ENCODE measurements at regions of chr12 and their contacts with region 1.

Region 1: DNA sequence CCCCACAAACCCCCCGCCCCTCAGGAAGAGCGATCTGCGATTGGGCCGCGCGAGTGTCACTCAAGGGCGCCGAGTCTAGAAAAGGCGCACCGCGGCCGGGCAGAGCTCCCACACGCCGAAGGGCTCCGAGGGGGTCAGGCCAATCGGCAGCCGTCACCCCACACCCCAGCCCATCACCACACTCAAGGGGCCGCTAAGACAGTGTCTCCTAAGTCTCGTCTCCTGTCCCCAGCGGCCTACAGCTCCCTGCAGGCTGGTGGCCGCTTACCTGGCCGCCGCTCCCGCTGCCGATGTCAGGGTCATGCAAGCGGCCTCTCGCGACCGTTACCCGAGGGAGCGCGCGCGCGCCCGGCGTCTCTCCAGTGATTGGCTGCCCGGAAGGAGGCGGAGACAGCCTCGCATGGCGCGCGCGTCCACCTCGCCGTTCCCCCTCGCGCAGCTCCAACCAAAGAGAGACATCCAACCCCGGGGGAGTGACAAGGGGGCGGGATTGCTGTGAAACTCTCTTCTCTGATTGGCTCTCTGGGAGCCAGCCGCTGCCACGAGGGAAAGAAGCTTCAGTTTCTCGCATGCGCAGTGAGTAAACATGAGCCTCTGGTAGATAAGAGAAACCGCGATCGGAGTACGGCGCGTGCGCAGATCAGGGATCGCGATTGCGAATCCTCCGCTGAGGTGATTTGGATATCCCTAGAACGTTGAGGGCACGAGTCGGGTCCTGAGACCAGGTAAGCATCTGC is at the starts of genes MPHOSPH9 and MTRFR:
- DNase-seq: peak; percentile 100
- H3K4me3 Mint-ChIP-seq: peak within 1 kb of the TSS; percentile 95
- H3K27ac Mint-ChIP-seq: peak within 1 kb of the TSS; percentile 99
- H3K4me1 Mint-ChIP-seq: peaks cover 48% of the 10 kb centered on the region
- H3K27me3 Mint-ChIP-seq: peaks cover 3% of the 10 kb centered on the region
- total RNA-seq, gene MPHOSPH9: 87.1 and 90.3 TPM in 2 replicates
- total RNA-seq, gene MTRFR: 30.3 and 30.5 TPM in 2 replicates

Region 2: DNA sequence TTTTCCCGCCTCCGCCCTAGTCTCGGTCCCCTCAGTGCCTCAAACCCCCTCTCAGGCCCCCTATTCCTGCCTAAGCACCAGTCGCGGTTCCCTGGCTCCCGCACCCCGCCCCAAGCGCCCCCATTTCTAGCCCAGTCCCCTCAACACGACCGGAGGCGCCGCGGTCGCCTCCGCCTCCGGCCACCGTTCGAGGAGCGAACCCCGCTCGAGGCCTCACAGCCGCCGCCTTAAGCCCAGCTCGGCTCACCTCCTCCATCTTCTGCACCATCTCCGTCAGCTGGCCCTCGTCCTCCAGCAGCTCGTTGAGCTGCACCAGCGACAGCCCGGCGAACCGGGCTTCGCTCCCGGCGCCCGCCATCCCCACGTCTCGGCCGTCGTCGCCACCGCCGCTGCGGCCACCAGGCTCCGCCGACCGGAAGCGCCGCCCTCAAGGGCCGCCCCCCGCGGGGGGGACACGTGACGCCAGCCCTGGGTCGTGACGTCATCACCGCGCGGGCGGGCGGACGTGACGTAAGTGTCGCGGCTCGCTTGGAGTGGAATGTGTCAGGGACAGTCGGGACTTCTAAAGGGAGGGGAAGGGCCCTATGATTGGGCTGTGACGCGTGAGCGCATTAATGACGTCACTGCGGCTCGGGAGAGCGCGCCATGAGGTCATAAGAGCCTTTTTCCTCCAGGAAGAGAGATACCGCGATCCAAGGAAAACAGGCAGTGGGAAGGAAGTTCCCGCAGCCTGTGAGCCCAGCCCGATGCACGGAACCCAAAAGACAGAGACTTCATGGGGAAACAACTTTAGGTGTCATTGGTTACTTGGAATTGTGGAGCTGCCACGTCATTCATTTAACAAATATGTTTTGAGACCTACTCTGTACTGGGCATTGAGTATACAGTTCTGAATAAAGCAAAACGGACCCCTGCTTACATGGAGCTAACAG is 337.0 kb before region 1 on chr12 and contains the start of gene VPS37B:
- intact Hi-C with region 1: loop called (anchors 10 kb)
- DNase-seq: peak; percentile 97
- H3K4me3 Mint-ChIP-seq: peak within 1 kb of the TSS; percentile 94
- H3K27ac Mint-ChIP-seq: peak within 1 kb of the TSS; percentile 90
- H3K4me1 Mint-ChIP-seq: peaks cover 73% of the 10 kb centered on the region
- H3K27me3 Mint-ChIP-seq: peaks cover 6% of the 10 kb centered on the region
- total RNA-seq, gene VPS37B: 9.2 and 9.5 TPM in 2 replicates

Region 3: DNA sequence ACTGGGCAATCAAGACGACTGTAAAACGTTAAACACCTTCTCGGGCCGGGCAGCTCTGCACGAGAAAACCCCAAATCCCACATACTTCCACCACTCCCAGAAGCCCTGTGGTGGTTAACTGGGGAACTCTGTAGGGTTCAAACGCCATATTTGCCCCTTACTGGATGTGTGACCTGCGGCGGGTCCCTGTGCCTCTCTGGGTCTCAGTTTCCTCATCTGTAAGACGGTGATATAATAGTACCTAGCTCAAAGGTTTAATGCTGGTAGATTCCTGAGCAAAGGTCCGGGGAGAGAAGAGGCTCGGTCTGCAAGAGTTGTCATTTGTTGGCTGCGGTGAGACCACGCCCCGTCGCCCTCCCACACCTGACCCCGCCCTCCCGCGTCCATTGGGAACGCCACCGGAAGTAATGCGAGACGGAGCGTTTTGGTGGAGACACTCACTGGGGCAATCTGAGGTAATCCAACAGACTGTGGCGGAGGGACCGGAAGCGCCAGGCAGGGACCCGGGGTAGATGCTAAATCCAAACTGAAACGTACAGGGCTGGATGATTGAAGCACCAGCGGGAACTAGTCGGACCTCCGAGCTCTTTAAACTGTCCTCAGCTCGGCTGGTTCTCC is 258.6 kb before region 1 on chr12:
- intact Hi-C with region 1: loop called (anchors 2 kb)
- DNase-seq: peak; percentile 100
- H3K4me3 Mint-ChIP-seq: peak overlapping the region; percentile 94
- H3K27ac Mint-ChIP-seq: peak overlapping the region; percentile 99
- H3K4me1 Mint-ChIP-seq: peaks cover 19% of the 10 kb centered on the region
- H3K27me3 Mint-ChIP-seq: no peaks in the 10 kb centered on the region

Region 4: DNA sequence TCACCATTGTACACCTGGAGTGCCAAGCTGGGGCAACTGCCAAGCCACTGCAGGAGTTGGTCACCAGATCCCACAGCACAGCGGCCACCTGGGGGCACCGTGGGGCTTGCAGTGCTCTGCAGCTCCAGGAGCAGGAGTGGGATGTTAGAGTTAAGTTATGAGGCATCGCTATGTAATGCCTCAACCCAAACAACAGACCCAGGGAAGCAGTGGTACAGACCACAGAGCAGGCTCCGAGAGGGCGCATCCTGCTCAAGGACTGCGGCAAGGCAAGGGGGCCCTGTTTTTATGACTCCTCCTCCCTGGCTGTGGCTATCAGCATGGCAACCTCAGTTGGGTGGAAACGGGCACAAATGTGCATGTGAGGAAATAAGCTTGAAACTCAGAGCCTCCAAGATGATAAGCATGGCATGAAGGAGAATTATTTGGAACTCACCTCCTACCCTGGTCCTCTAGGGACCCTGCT is 189.4 kb before region 1 on chr12:
- intact Hi-C with region 1: loop called (anchors 1 kb)
- DNase-seq: peak; percentile 89
- H3K4me3 Mint-ChIP-seq: no peak overlapping the region
- H3K27ac Mint-ChIP-seq: peak overlapping the region; percentile 78
- H3K4me1 Mint-ChIP-seq: peaks cover 22% of the 10 kb centered on the region
- H3K27me3 Mint-ChIP-seq: no peaks in the 10 kb centered on the region

Region 5: GRCh38 chr12:123150744-123151456 is 82.1 kb before region 1 on chr12 and contains the start of gene PITPNM2:
- intact Hi-C with region 1: loop called (anchors 5 kb)
- DNase-seq: peak; percentile 91
- H3K4me3 Mint-ChIP-seq: peak within 1 kb of the TSS; percentile 85
- H3K27ac Mint-ChIP-seq: peak within 1 kb of the TSS; percentile 86
- H3K4me1 Mint-ChIP-seq: peaks cover 32% of the 10 kb centered on the region
- H3K27me3 Mint-ChIP-seq: peaks cover 15% of the 10 kb centered on the region
- total RNA-seq, gene PITPNM2: 19.0 and 19.2 TPM in 2 replicates

Region 6: GRCh38 chr12:123271001-123271729 is 38.2 kb after region 1 on chr12:
- intact Hi-C with region 1: loop called (anchors 2 kb)
- DNase-seq: peak; percentile 93
- H3K4me3 Mint-ChIP-seq: peak overlapping the region; percentile 92
- H3K27ac Mint-ChIP-seq: no peak overlapping the region
- H3K4me1 Mint-ChIP-seq: peaks cover 16% of the 10 kb centered on the region
- H3K27me3 Mint-ChIP-seq: no peaks in the 10 kb centered on the region

Region 7: DNA sequence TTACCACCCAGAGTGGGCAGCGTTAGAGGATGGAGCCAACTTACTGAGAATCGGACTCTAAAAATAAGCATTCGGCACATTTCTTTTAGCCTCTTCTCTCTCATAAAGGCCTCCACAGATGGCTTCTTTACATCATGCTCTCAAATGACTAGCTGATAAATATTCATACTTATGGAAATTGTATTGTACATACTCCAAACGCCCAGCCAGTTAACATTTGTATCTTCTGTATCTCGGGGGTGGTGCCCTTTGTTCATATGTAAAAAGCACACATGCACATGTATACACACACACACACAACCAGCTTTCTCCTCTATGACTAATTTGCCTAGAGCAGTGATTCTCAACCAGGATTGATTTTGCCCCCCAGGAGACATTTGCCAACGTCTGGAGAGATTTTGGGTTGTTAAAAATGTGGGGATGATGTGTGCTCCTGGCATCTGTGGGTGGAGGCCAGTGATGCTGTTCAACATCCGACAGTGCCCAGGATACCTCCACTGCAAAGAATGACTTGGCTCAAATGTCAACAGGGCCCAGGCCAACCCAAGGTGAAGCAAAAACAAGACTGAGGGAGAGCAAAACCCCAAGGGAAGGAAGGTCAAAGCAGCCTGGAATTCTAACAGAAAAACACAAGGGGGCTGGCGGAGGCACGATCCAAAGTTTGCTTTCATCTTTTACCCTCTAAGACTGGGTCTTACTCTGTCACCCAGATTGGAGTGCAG is 53.8 kb after region 1 on chr12:
- intact Hi-C with region 1: no loop called
- DNase-seq: no peak
- H3K4me3 Mint-ChIP-seq: no peak overlapping the region
- H3K27ac Mint-ChIP-seq: no peak overlapping the region
- H3K4me1 Mint-ChIP-seq: peaks cover 2% of the 10 kb centered on the region
- H3K27me3 Mint-ChIP-seq: no peaks in the 10 kb centered on the region

Region 8: GRCh38 chr12:123398550-123399254 is 165.7 kb after region 1 on chr12:
- intact Hi-C with region 1: no loop called
- DNase-seq: no peak
- H3K4me3 Mint-ChIP-seq: no peak overlapping the region
- H3K27ac Mint-ChIP-seq: no peak overlapping the region
- H3K4me1 Mint-ChIP-seq: peaks cover 2% of the 10 kb centered on the region
- H3K27me3 Mint-ChIP-seq: no peaks in the 10 kb centered on the region

Region 9: DNA sequence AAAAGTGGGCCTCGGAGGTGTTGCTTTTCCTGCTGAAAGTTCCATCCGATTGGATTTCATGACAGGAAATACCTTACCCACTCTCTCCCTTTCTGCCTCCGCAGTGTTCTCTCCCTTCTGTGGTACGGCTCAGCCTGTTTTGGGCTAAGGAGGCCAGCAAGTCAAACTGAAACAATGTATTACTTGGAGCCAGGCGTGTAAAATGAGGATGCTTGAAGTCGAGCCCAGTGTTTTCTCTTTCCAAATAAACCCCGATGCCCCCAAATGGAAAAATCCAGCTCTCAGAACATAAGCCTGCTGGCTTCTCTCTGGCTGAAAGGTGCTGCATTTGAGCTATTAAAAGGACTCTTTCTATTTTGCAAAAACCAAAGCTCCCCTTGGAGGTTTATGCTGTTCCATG is 864.7 kb after region 1 on chr12:
- intact Hi-C with region 1: no loop called
- DNase-seq: no peak
- H3K4me3 Mint-ChIP-seq: no peak overlapping the region
- H3K27ac Mint-ChIP-seq: no peak overlapping the region
- H3K4me1 Mint-ChIP-seq: no peaks in the 10 kb centered on the region
- H3K27me3 Mint-ChIP-seq: no peaks in the 10 kb centered on the region

Region 10: GRCh38 chr12:124545508-124546418 is 1312.8 kb after region 1 on chr12:
- intact Hi-C with region 1: no loop called
- DNase-seq: peak; percentile 85
- H3K4me3 Mint-ChIP-seq: peak overlapping the region; percentile 25
- H3K27ac Mint-ChIP-seq: peak overlapping the region; percentile 57
- H3K4me1 Mint-ChIP-seq: peaks cover 38% of the 10 kb centered on the region
- H3K27me3 Mint-ChIP-seq: no peaks in the 10 kb centered on the region

Measured in activated CD4-positive, alpha-beta T cell treated with anti-CD3 and anti-CD28 coated beads, Interleukin-2, amount 10 ng/mL, durations not matched to agents 24 days and 14 days (primary cell).